HepG2 (cell line): ENCODE measurements at regions of chr19 and their contacts with region 1.

Region 1: GRCh38 chr19:47225746-47226425 is 5.1 kb downstream of the BBC3 start:
- DNase-seq: peak; percentile 72
- ATAC-seq: peak; percentile 70
- H3K4me3 ChIP-seq: peak overlapping the region; percentile 94 to 100 (median 95); a peak in 5 of 6 replicates
- H3K27ac ChIP-seq: peak overlapping the region; percentile 93
- H3K4me1 ChIP-seq: peaks cover 24% of the 10 kb centered on the region
- H3K27me3 ChIP-seq: peaks cover 0 to 4% of the 10 kb centered on the region in 2 experiments; a peak in 1 of 5 replicates
- CTCF ChIP-seq: peak; percentile 43; the same call in 1 of the 2 replicates
- EP300 ChIP-seq: no peak
- POLR2A ChIP-seq: peak; percentile 99
- RAD21 ChIP-seq: peak; percentile 69

Region 2: GRCh38 chr19:47094557-47095475 is 131.1 kb before region 1 on chr19:
- CTCF ChIA-PET with region 1: no interaction called
- POLR2A ChIA-PET with region 1: interaction called, 12 read pairs
- in situ Hi-C with region 1: no loop called
- intact Hi-C with region 1: no loop called
- DNase-seq: peak; percentile 85
- ATAC-seq: peak; percentile 72
- H3K4me3 ChIP-seq: peak overlapping the region in 2 of 3 experiments; percentile 8 to 64; a peak in 3 of 6 replicates
- H3K27ac ChIP-seq: peak overlapping the region; percentile 91
- H3K4me1 ChIP-seq: peaks cover 63% of the 10 kb centered on the region
- H3K27me3 ChIP-seq: no peaks in the 10 kb centered on the region
- CTCF ChIP-seq: no peak
- EP300 ChIP-seq: peak in 1 of 2 experiments; percentile 65; a peak in 1 of 4 replicates
- POLR2A ChIP-seq: peak in 1 of 2 experiments; percentile 17; a peak in 1 of 4 replicates
- RAD21 ChIP-seq: no peak; the same call in 1 of the 2 replicates

Region 3: DNA sequence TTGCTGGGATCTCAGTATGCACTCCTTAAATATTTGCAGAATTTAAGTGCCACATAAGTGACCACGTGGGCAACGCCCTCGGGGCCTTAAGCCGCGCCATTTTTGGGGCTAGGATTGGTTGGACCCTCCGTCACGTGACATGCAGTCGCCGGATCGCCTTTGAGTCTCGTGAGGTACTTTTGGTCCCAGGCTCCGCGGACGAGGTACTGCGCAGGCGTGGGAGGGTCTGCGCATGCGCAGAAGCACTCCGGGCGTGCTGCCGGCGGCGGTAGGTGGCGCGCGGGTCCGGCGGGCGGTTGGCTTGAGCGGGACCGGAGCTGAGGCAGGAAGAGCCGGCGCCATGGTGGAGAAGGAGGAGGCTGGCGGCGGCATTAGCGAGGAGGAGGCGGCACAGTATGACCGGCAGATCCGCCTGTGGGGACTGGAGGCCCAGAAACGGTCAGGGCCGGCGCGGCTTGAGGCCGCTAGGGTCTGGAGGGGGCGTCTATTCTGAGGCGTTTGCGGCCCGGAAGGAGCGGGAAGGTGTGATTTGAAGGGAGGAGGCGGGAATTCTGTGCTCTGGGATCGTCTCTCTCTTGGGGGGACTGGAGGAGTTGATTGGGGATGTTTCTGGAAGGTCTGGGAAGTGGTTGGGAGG is 95.2 kb before region 1 on chr19 and contains the start of gene SAE1:
- CTCF ChIA-PET with region 1: no interaction called
- POLR2A ChIA-PET with region 1: interaction called, 20 read pairs
- in situ Hi-C with region 1: no loop called
- intact Hi-C with region 1: no loop called
- DNase-seq: peak; percentile 97
- ATAC-seq: peak; percentile 90
- H3K4me3 ChIP-seq: peak within 1 kb of the TSS; percentile 78 to 87 (median 87)
- H3K27ac ChIP-seq: peak within 1 kb of the TSS; percentile 81
- H3K4me1 ChIP-seq: peaks cover 44% of the 10 kb centered on the region
- H3K27me3 ChIP-seq: no peaks in the 10 kb centered on the region; a peak in 1 of 5 replicates
- CTCF ChIP-seq: peak; percentile 90
- EP300 ChIP-seq: no peak
- POLR2A ChIP-seq: peak; percentile 45 to 81; a peak in 3 of 4 replicates
- RAD21 ChIP-seq: no peak; the same call in 1 of the 2 replicates
- total RNA-seq, gene SAE1: 197 and 250 TPM in 2 replicates

Region 4: GRCh38 chr19:47190167-47190727 is 35.6 kb before region 1 on chr19:
- CTCF ChIA-PET with region 1: no interaction called
- POLR2A ChIA-PET with region 1: interaction called, 31 read pairs
- in situ Hi-C with region 1: no loop called
- intact Hi-C with region 1: no loop called
- DNase-seq: peak; percentile 96
- ATAC-seq: peak; percentile 67
- H3K4me3 ChIP-seq: peak overlapping the region; percentile 36 to 45 (median 43); a peak in 5 of 6 replicates
- H3K27ac ChIP-seq: peak overlapping the region; percentile 83
- H3K4me1 ChIP-seq: peaks cover 65% of the 10 kb centered on the region
- H3K27me3 ChIP-seq: no peaks in the 10 kb centered on the region
- CTCF ChIP-seq: no peak
- EP300 ChIP-seq: peak; percentile 92 to 97; a peak in 3 of 4 replicates
- POLR2A ChIP-seq: peak; percentile 44; a peak in 3 of 4 replicates
- RAD21 ChIP-seq: no peak; the same call in 1 of the 2 replicates

Region 5: DNA sequence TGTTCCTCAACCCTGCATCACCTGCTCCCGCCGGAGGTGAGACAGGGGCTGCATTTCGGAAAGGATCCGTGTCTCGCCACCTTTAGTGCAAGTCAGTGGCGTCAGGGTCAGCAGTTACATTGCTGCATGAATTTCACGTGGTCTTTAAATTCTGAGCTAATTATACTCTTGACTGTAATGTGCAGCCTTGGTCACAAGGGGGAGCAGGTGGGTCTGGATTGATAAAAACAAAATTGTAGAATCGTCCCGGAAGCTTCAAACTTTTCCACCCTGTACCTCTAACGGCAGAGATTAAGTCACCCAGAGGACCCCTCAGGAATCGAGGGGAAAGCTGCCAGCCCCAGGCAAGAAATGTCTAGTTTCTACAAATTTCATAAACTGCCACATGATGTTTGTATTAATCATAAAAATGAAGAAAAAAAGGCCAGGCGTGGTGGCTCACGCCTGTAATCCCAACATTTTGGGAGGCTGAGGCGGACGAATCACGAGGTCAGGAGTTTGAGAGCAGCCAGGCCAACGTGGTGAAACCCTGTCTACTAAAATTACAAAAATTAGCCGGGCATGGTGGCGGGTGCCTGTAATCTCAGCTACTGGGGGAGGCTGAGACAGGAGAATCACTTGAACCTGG is 15.1 kb before region 1 on chr19:
- CTCF ChIA-PET with region 1: no interaction called
- POLR2A ChIA-PET with region 1: interaction called, 51 read pairs
- in situ Hi-C with region 1: no loop called
- intact Hi-C with region 1: no loop called
- DNase-seq: peak; percentile 71
- ATAC-seq: peak; percentile 52
- H3K4me3 ChIP-seq: no peak overlapping the region
- H3K27ac ChIP-seq: peak overlapping the region; percentile 55
- H3K4me1 ChIP-seq: peaks cover 11% of the 10 kb centered on the region
- H3K27me3 ChIP-seq: no peaks in the 10 kb centered on the region
- CTCF ChIP-seq: peak; percentile 80
- EP300 ChIP-seq: no peak
- POLR2A ChIP-seq: 0 out of 4 replicates have a peak, but pooled peaks of 1 of the 2 experiments have one; percentile 16
- RAD21 ChIP-seq: peak; percentile 68

Region 6: GRCh38 chr19:47256688-47257443 is 31.0 kb after region 1 on chr19:
- CTCF ChIA-PET with region 1: no interaction called
- POLR2A ChIA-PET with region 1: interaction called, 58 read pairs
- in situ Hi-C with region 1: no loop called
- intact Hi-C with region 1: no loop called
- DNase-seq: peak; percentile 95
- ATAC-seq: peak; percentile 78
- H3K4me3 ChIP-seq: peak overlapping the region; percentile 72 to 88 (median 88); a peak in 4 of 6 replicates
- H3K27ac ChIP-seq: peak overlapping the region; percentile 86
- H3K4me1 ChIP-seq: peaks cover 43% of the 10 kb centered on the region
- H3K27me3 ChIP-seq: no peaks in the 10 kb centered on the region
- CTCF ChIP-seq: no peak
- EP300 ChIP-seq: no peak
- POLR2A ChIP-seq: no peak
- RAD21 ChIP-seq: no peak

Region 7: GRCh38 chr19:47273313-47273977 is 47.6 kb after region 1 on chr19:
- CTCF ChIA-PET with region 1: no interaction called
- POLR2A ChIA-PET with region 1: interaction called, 17 read pairs
- in situ Hi-C with region 1: no loop called
- intact Hi-C with region 1: no loop called
- DNase-seq: peak; percentile 84
- ATAC-seq: peak; percentile 89
- H3K4me3 ChIP-seq: peak overlapping the region; percentile 73 to 85 (median 75)
- H3K27ac ChIP-seq: peak overlapping the region; percentile 98
- H3K4me1 ChIP-seq: peaks cover 24% of the 10 kb centered on the region
- H3K27me3 ChIP-seq: no peaks in the 10 kb centered on the region
- CTCF ChIP-seq: no peak
- EP300 ChIP-seq: no peak
- POLR2A ChIP-seq: peak in 1 of 2 experiments; percentile 55; a peak in 3 of 4 replicates
- RAD21 ChIP-seq: peak; percentile 18; the same call in 1 of the 2 replicates

Region 8: DNA sequence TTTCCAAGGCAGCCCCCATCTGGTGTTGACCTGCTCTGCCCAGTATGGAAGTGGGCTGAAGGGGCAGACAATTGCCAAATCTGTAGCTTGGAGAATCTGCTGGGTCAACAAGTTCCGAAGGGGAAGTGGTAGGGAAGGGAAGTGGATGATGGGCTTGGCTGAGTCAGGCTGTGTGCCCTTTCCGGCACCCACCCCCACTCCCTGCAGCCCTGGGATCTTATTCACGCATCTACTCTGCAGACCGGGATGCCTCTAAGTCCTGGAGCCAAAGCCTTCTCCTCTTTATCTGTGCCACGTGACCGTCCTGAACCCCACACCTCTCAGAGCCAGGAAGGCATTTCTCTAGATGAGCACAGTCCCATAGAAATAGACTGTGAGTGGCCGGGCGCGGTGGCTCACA is 98.6 kb after region 1 on chr19:
- CTCF ChIA-PET with region 1: no interaction called
- POLR2A ChIA-PET with region 1: no interaction called
- in situ Hi-C with region 1: no loop called
- intact Hi-C with region 1: no loop called
- DNase-seq: no peak
- ATAC-seq: no peak
- H3K4me3 ChIP-seq: no peak overlapping the region
- H3K27ac ChIP-seq: no peak overlapping the region
- H3K4me1 ChIP-seq: 0 out of 2 replicates have a peak, but pooled peaks cover 8% of the 10 kb centered on the region
- H3K27me3 ChIP-seq: peaks cover 3 to 7% of the 10 kb centered on the region in 2 experiments; a peak in 1 of 5 replicates
- CTCF ChIP-seq: no peak
- EP300 ChIP-seq: no peak
- POLR2A ChIP-seq: no peak
- RAD21 ChIP-seq: no peak